PC-9 (cell line): ENCODE measurements at regions of chr5 and their contacts with region 1.

Region 1: DNA sequence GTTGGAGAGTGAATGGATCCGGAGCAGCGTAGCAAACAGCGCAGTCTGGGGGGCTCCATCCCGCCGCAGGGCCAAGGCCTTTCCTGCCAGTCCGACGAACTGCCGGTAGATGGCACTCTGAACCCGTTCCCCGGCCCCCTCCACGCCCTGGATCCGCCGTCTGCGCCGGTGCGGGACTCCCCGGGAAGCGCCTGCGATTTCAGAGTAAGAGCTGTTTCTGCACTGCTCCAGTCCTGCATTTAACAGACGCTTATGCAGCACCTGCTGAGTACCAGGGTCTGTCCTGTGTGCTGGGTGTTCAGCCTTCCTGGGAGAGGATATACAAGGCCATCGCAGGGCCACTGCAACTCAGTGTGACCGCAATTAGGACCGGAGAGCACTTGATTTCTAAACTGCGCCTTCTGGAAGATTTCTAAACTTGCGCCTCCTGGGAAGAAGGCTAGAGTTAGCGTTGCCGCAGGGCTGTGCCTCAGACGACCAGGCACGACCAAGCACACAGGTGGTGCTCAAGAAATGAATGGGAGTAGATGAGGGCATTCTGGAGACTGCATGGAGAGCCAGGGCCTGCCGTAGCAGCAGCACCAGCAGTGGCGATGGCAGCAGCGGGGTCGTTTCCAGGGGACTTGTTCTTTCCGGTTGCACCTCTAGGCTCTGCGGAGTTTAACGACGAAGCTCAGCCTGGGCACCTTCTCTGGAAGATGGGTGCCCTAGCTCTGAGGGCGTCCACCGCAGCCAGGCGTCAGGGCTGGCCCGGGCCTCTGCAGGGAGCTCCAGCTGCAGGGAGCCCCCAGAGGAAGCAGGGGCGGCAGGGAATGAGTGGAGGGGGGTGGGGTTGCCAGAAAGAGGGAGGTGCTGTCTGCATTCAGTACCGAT is 14.3 kb upstream of the TIFAB start:
- DNase-seq: peak in 1 of 2 experiments; percentile 71
- H3K4me3 ChIP-seq: no peak overlapping the region
- H3K27ac ChIP-seq: no peak overlapping the region
- H3K4me1 ChIP-seq: no peaks in the 10 kb centered on the region
- H3K27me3 ChIP-seq: peaks cover 95% of the 10 kb centered on the region
- CTCF ChIP-seq: peak; percentile 76

Region 2: GRCh38 chr5:135551593-135552447 is 85.4 kb after region 1 on chr5:
- CTCF ChIA-PET with region 1: interaction called, 31 read pairs
- POLR2A ChIA-PET with region 1: interaction called, 3 read pairs
- intact Hi-C with region 1: loop called (anchors 1 kb)
- DNase-seq: peak; percentile 54 to 61
- H3K4me3 ChIP-seq: no peak overlapping the region
- H3K27ac ChIP-seq: no peak overlapping the region
- H3K4me1 ChIP-seq: no peaks in the 10 kb centered on the region
- H3K27me3 ChIP-seq: peaks cover 70% of the 10 kb centered on the region
- CTCF ChIP-seq: peak; percentile 83

Region 3: DNA sequence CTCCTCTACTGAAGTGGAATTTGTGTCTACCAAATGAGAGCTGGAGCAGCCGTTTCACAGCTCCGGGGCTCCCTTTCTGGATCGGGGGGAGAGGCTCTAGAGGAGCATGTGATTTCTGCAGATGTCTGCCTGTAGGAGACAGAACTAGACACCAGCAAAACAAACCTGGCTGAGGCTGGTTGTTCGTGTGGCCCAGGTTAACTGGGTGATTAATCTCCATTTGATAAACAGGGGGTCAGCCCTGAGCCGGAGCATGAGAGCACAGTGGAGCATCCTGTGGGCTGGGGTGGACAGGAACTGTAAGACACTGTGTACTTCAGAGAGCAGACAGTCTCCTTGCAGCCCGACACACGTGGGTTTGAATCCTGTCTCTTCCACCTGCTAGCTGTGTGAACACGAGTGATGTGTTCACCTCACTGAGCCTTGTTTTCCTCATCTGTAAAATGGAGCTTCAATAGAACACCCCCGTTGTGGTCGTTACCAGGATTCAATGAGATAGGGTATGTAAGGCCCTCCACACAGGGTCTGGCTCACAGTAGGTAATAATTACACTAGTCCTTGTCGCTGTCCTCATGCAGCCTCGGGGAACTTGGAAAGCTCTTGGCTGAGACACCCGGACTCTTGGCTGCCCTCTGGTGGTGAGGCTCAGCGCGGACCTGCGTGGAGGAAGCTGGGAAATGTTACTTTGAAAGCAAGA is 99.5 kb after region 1 on chr5:
- CTCF ChIA-PET with region 1: interaction called, 7 read pairs
- POLR2A ChIA-PET with region 1: no interaction called
- intact Hi-C with region 1: loop called (anchors 1 kb)
- DNase-seq: peak in 1 of 2 experiments; percentile 66
- H3K4me3 ChIP-seq: no peak overlapping the region
- H3K27ac ChIP-seq: no peak overlapping the region
- H3K4me1 ChIP-seq: no peaks in the 10 kb centered on the region
- H3K27me3 ChIP-seq: peaks cover 42% of the 10 kb centered on the region
- CTCF ChIP-seq: peak; percentile 90

Region 4: DNA sequence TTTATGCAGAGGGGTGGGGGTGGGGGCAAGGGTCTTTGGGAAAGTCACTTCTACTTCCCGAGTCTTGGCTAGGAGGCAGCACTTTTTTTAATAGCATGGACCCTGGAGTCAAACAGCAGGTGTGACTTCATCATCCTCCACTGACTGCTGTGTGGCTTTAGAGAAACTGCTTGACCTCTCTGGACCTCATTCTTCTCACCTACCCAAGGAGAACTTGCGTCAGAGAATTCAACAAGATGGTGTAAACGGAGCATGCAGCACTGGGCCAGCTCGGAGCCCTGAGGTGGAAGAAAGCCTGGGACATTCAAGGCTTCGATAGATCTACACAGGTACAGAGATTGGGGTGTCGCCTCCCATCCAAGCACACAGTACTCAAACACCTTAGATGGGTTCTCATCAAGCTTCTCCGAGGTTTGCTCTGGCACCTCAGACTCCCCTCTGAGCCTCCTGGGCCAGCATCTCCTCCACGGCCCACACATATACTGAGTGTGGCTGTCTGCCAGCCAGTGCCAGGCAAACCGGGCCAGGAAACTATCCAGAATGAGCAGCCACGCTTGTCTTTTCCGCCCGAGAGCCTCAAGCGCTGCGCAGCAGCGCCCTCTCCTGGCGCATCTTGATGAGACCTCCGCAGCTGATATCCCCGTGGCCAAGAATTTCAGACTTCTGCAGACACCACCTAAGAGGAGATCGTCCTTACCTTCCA is 363.4 kb after region 1 on chr5:
- CTCF ChIA-PET with region 1: interaction called, 4 read pairs
- POLR2A ChIA-PET with region 1: no interaction called
- intact Hi-C with region 1: loop called (anchors 1 kb)
- DNase-seq: peak in 1 of 2 experiments; percentile 35
- H3K4me3 ChIP-seq: no peak overlapping the region
- H3K27ac ChIP-seq: no peak overlapping the region
- H3K4me1 ChIP-seq: no peaks in the 10 kb centered on the region
- H3K27me3 ChIP-seq: peaks cover 87% of the 10 kb centered on the region
- CTCF ChIP-seq: peak; percentile 88